ENCODE measurements at regions of chr2 and their contacts with region 1.

Region 1: DNA sequence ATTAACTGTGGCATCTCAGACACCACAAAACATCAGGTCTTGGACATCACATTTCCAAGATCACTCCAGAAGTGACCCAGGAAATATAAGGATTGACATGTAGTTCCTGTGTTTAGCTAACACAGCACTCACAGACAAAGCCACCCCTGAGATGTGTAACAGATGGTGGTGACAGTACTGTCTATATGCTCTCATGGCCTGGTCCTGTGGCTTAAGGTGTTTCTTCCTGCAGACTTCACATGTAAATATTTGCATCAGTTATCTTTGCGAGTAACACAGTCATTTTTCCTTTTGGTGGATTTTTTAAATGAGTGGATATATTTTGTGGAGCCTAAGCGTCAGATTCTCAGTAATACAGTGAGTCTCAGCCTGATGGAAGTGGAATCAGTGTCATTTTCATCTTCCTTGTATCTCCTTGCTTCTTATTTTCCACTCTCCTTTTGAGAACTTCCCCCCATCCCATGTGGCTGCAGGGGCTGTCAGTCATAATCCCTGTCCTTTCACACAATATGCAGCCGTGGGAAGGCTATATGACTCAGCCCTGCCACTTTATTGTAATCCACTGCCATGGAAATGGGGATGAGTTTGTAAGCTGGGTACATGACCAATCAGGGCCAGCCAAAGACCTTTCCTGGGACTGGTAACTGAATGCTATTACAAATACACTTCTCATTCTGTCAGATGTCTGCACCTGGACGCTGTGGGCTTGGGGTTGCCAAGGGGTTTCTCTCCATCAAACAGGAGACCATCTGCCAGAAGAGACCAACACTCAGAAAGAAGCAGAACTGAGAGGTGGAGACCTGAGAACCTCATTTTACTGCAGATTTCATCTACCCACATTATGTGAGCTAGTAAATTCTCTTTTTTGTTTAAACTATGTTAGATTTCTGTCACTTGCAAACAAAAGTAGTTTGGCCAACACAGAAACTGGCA is 74.3 kb downstream of the ICOS start:
- DNase-seq: peak; percentile 31
- ATAC-seq: peak; percentile 42
- H3K4me3 Mint-ChIP-seq: peak overlapping the region; percentile 34
- H3K27ac Mint-ChIP-seq: peak overlapping the region; percentile 72
- H3K4me1 Mint-ChIP-seq: peaks cover 84% of the 10 kb centered on the region
- H3K27me3 Mint-ChIP-seq: no peaks in the 10 kb centered on the region

Region 2: GRCh38 chr2:203940039-203940438 is 70.9 kb before region 1 on chr2:
- CTCF ChIA-PET with region 1: interaction called, 4 read pairs
- POLR2A ChIA-PET with region 1: interaction called, 8 read pairs
- intact Hi-C with region 1: loop called in 1 of 2 experiments (anchors 1 kb)
- DNase-seq: no peak
- ATAC-seq: peak; percentile 7
- H3K4me3 Mint-ChIP-seq: peak overlapping the region; percentile 87
- H3K27ac Mint-ChIP-seq: peak overlapping the region; percentile 98
- H3K4me1 Mint-ChIP-seq: peaks cover 53% of the 10 kb centered on the region
- H3K27me3 Mint-ChIP-seq: no peaks in the 10 kb centered on the region

Region 3: DNA sequence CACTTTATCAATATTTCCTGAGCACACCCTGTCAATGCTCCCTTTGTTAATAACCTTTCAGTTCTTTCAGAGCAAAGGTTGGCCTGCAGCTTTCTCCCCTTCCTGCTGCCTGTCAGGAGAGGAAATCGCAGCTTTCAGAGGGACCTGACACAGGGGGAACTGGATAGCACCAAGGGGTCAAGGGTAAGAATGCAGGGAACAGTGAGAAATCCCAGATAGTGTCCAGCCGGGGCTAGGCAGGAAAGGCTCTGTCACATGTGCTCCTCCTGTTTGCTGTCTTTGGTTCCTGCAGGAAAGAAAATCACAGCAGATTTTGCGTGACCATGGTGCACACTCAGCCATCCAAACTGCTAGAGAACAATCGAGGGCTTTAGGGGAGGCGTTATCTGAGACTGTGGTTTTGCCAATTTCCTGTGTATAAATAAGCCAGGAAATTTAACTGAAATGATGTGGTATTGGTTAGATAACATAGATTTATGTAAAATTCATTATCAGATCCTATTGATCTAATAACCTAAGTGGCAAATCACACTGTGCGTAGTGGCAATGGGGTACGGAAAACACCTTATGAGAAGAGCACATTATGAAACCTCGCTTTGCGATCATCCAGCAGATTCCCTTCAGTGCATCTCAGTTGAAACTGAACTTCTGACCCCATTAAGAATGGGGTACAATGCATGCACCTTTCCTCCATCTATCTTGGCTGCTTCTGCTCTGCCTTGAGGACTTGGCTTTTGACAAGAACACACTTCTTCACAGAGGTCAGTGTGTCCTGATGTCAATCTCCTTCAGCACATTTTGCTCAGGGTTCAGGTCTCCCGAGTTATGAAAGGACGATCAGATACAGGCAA is 103.6 kb after region 1 on chr2:
- CTCF ChIA-PET with region 1: no interaction called
- POLR2A ChIA-PET with region 1: no interaction called
- intact Hi-C with region 1: no loop called
- DNase-seq: no peak
- ATAC-seq: no peak
- H3K4me3 Mint-ChIP-seq: no peak overlapping the region
- H3K27ac Mint-ChIP-seq: no peak overlapping the region
- H3K4me1 Mint-ChIP-seq: peaks cover 37% of the 10 kb centered on the region
- H3K27me3 Mint-ChIP-seq: peaks cover 2% of the 10 kb centered on the region